Activated CD8-positive, alpha-beta memory T cell treated with anti-CD3 and anti-CD28 coated beads, Interleukin-2, amount 10 ng/mL, durations not matched to agents 7 days and 5 days (primary cell): ENCODE measurements at regions of chr19 and their contacts with region 1.

Region 1: GRCh38 chr19:46821498-46822409 is 28.9 kb downstream of the AP2S1 start:
- DNase-seq: peak; percentile 85
- ATAC-seq: peak; percentile 89
- H3K4me3 Mint-ChIP-seq: peak overlapping the region; percentile 18
- H3K27ac Mint-ChIP-seq: peak overlapping the region; percentile 83
- H3K4me1 Mint-ChIP-seq: peaks cover 57% of the 10 kb centered on the region
- H3K27me3 Mint-ChIP-seq: no peaks in the 10 kb centered on the region

Region 2: DNA sequence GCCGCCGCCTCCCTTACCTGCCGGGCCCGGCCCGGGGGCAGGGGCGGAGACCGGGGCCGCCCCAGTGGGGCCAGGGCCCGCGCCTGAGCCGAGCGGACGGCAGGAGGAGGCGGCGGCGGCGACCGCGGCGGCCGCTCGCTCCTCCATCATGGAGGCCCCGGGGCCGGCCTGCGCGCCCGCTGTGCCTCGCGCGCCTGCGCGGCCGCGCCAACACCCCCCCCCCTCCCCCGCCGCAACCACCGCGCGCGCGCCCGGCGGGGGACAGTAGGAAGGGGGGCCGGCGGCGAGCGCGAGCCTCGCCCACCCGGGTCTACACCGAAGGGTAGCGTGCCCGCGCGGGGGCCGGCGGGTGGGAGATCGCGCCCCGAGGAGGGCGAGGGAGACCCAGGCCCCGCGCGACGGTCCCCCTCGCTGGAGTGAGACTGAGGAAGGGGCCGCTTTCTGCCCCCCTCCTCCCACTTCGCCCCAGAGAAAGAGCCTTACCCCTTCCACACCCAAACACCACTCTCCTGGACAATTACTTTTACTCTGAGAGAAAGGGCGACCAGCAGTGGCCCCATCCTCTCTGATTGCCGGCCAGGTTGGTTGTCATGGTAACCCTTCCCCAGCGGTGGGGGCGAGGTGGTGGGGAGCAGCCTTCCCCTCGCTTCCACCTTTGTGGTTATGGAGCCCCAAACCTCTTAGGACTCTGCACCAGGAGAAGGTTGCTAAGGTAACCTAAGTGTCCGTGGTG is 75.3 kb before region 1 on chr19 and contains the start of gene STRN4:
- CTCF ChIA-PET with region 1: interaction called, 10 read pairs
- DNase-seq: peak; percentile 68
- ATAC-seq: peak; percentile 77
- H3K4me3 Mint-ChIP-seq: peak within 1 kb of the TSS; percentile 94
- H3K27ac Mint-ChIP-seq: peak within 1 kb of the TSS; percentile 86
- H3K4me1 Mint-ChIP-seq: peaks cover 52% of the 10 kb centered on the region
- H3K27me3 Mint-ChIP-seq: no peaks in the 10 kb centered on the region
- total RNA-seq, gene STRN4: 93.0 to 95.8 TPM

Region 3: GRCh38 chr19:46788262-46788967 is 33.3 kb before region 1 on chr19 and contains the start of gene SLC1A5:
- CTCF ChIA-PET with region 1: interaction called, 77 read pairs
- DNase-seq: peak; percentile 99
- ATAC-seq: peak; percentile 72
- H3K4me3 Mint-ChIP-seq: peak within 1 kb of the TSS; percentile 90
- H3K27ac Mint-ChIP-seq: peak within 1 kb of the TSS; percentile 97
- H3K4me1 Mint-ChIP-seq: peaks cover 49% of the 10 kb centered on the region
- H3K27me3 Mint-ChIP-seq: no peaks in the 10 kb centered on the region
- total RNA-seq, gene SLC1A5: 196 to 259 TPM

Region 4: GRCh38 chr19:46878613-46879375 is 57.0 kb after region 1 on chr19:
- CTCF ChIA-PET with region 1: no interaction called
- DNase-seq: no peak
- ATAC-seq: peak; percentile 36
- H3K4me3 Mint-ChIP-seq: no peak overlapping the region
- H3K27ac Mint-ChIP-seq: no peak overlapping the region
- H3K4me1 Mint-ChIP-seq: peaks cover 5% of the 10 kb centered on the region
- H3K27me3 Mint-ChIP-seq: no peaks in the 10 kb centered on the region